Astrocyte of the cerebellum (primary cell): ENCODE measurements at regions of chr17 and their contacts with region 1.

Region 1: GRCh38 chr17:64658931-64659330 is 3.2 kb downstream of the SMURF2 start:
- DNase-seq: peak; percentile 75
- H3K4me3 ChIP-seq: no peak overlapping the region
- CTCF ChIP-seq: no peak

Region 2: DNA sequence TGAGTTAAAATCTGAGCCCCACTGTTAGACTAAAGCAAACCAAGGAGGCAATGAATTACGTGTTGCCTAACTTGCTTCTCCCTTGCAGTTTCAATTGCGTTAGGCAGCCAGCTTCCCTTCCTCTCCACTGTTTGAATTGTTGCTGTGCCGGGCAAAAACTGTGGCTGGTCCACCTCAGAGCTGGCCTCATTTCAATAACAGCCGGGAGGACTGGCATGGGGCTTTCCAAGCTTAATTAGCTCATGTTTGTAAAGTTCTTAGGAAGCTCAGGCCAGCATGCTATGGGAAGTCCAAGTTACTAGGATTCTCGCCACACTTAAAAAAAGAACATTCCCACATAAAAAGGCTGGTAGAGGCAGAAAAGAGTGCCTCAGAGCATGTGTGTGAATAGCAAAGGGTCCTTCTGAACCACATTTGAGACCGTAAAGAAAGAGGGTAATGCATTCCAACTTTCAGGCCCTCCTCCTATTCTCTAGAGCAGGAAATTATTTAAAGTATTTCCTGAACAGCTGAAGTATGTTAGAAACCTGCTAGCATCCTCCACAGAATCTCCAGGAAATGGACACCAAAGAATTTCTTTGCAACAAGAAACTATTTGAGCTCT is 82.2 kb after region 1 on chr17:
- in situ Hi-C with region 1: loop called (anchors 5 kb)
- DNase-seq: peak; percentile 46
- H3K4me3 ChIP-seq: no peak overlapping the region
- CTCF ChIP-seq: no peak